PC-3 (cell line): ENCODE measurements at regions of chr3 and their contacts with region 1.

Region 1: DNA sequence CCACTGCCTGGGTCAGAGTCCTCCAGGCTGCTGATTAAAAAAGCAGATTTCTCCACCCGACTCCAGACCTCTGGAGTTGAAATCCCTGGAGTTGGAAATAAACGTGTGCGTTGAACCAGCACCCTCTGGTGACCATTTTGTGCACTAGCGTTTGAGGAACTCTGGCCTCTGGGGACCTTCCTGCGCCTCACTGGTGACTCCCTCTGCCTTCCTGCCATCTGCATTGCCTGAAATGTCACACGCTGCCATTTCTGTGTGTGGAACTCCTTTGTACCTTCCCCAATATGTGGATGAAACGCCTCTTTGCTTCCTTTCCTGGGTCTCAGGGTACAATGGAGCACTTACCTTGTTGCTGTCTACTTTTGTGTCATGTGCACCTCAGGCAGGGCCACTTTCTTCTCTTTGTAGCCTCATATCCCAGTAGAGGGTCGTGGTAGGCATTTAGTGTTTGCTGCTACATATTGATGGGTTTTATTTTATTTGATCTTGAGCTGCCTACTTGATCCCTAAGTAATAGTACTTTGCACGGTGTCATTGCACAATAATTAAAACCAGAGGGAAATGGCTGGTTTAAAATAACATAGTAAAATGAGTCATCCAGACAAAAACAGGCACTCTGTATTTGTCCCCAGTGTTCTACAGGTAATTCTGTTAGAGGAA is 56.8 kb downstream of the GPR171 start:
- DNase-seq: peak; percentile 89
- ATAC-seq: peak; percentile 86
- H3K4me3 ChIP-seq: peak overlapping the region; percentile 53
- H3K27ac ChIP-seq: peak overlapping the region; percentile 50
- H3K4me1 ChIP-seq: peaks cover 17% of the 10 kb centered on the region
- H3K27me3 ChIP-seq: peaks cover 26% of the 10 kb centered on the region
- CTCF ChIP-seq: peak; percentile 97

Region 2: GRCh38 chr3:150721285-150722130 is 424.7 kb before region 1 on chr3:
- CTCF ChIA-PET with region 1: no interaction called
- POLR2A ChIA-PET with region 1: no interaction called
- intact Hi-C with region 1: loop called (anchors 1 kb)
- DNase-seq: peak; percentile 86
- ATAC-seq: peak; percentile 61
- H3K4me3 ChIP-seq: no peak overlapping the region
- H3K27ac ChIP-seq: no peak overlapping the region
- H3K4me1 ChIP-seq: peaks cover 13% of the 10 kb centered on the region
- H3K27me3 ChIP-seq: no peaks in the 10 kb centered on the region
- CTCF ChIP-seq: peak; percentile 94

Region 3: GRCh38 chr3:150870396-150870795 is 275.8 kb before region 1 on chr3:
- CTCF ChIA-PET with region 1: no interaction called
- POLR2A ChIA-PET with region 1: no interaction called
- intact Hi-C with region 1: loop called (anchors 5 kb)
- DNase-seq: no peak
- ATAC-seq: no peak
- H3K4me3 ChIP-seq: no peak overlapping the region
- H3K27ac ChIP-seq: no peak overlapping the region
- H3K4me1 ChIP-seq: no peaks in the 10 kb centered on the region
- H3K27me3 ChIP-seq: peaks cover 15% of the 10 kb centered on the region; the same call in 1 of the 2 replicates
- CTCF ChIP-seq: no peak

Region 4: GRCh38 chr3:151008699-151009098 is 137.5 kb before region 1 on chr3:
- CTCF ChIA-PET with region 1: no interaction called
- POLR2A ChIA-PET with region 1: no interaction called
- intact Hi-C with region 1: loop called (anchors 1 kb)
- DNase-seq: peak; percentile 22
- ATAC-seq: peak; percentile 53
- H3K4me3 ChIP-seq: no peak overlapping the region
- H3K27ac ChIP-seq: no peak overlapping the region
- H3K4me1 ChIP-seq: no peaks in the 10 kb centered on the region
- H3K27me3 ChIP-seq: peaks cover 45% of the 10 kb centered on the region
- CTCF ChIP-seq: peak; percentile 41; the same call in 1 of the 2 replicates

Region 5: GRCh38 chr3:151086484-151087456 is 59.4 kb before region 1 on chr3:
- CTCF ChIA-PET with region 1: interaction called, 4 read pairs
- POLR2A ChIA-PET with region 1: no interaction called
- intact Hi-C with region 1: loop called (anchors 2 kb)
- DNase-seq: peak; percentile 83
- ATAC-seq: peak; percentile 89
- H3K4me3 ChIP-seq: peak overlapping the region; percentile 73
- H3K27ac ChIP-seq: no peak overlapping the region
- H3K4me1 ChIP-seq: peaks cover 10% of the 10 kb centered on the region
- H3K27me3 ChIP-seq: peaks cover 40% of the 10 kb centered on the region
- CTCF ChIP-seq: peak; percentile 55; the same call in 1 of the 2 replicates

Region 6: DNA sequence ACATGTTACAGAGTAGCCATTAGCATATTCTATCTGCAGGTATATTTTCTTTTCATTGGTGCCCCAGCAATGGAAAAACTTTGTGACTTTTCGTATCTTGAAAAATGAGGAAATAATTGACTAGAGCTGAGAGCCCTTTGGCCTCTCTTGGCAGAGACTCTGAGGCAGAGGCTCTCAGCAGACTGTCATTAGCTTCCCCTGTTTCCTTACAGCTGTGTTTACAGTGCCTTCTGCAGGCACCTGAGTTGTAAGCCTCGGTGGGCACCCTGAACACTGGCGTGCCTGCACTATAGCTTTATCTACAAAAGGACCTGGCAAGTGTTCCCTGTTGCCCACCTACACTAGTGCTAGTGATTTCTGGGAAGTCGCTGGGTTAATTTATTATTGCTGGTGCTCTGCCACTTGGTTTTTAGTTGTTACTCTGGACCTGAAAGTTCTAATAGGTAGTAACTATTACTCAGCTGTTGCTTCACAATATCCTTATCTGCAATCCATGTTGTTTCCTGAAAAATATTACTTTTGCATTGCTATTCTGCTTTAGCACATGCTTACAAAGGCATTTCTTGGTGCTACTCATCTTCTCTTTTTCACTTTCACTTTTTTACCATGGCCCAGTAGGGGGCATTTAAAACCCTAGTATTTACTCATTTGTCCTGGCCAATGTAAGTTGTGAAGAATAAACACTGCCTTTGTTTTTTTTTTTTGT is 64.6 kb after region 1 on chr3:
- CTCF ChIA-PET with region 1: no interaction called
- POLR2A ChIA-PET with region 1: no interaction called
- intact Hi-C with region 1: no loop called
- DNase-seq: peak; percentile 21
- ATAC-seq: no peak
- H3K4me3 ChIP-seq: no peak overlapping the region
- H3K27ac ChIP-seq: no peak overlapping the region
- H3K4me1 ChIP-seq: no peaks in the 10 kb centered on the region
- H3K27me3 ChIP-seq: no peaks in the 10 kb centered on the region
- CTCF ChIP-seq: peak; percentile 58